Endothelial cell of umbilical vein (primary cell): ENCODE measurements at regions of chr15 and their contacts with region 1.

Region 1: DNA sequence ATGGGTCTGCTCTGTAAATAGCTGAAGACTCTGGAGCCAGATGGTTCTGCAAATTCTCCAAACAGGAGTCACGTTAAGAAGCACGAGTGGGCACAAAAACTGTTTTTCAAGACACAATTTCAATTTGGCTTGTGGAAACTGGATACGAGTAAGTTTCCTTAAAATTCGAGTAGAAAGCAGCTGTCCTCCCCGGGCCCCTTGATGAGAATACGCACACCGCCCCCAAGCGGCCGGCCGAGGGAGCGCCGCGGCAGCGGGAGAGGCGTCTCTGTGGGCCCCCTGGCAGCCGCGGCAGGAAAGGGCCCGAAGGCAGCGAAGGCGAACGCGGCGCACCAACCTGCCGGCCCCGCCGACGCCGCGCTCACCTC is 778 bp upstream of the THBS1 start:
- DNase-seq: peak; percentile 93
- H3K4me3 ChIP-seq: peak overlapping the region; percentile 7 to 61 (median 55)
- H3K27ac ChIP-seq: peak overlapping the region; percentile 98
- H3K4me1 ChIP-seq: peaks cover 20% of the 10 kb centered on the region
- H3K27me3 ChIP-seq: no peaks in the 10 kb centered on the region
- CTCF ChIP-seq: peak; percentile 93 to 96
- POLR2A ChIP-seq: peak; percentile 74

Region 2: GRCh38 chr15:38707802-38708671 is 872.1 kb before region 1 on chr15:
- CTCF ChIA-PET with region 1: interaction called, 30 read pairs
- POLR2A ChIA-PET with region 1: no interaction called
- dilution Hi-C with region 1: no loop called
- intact Hi-C with region 1: loop called (anchors 1 kb)
- DNase-seq: peak; percentile 87
- H3K4me3 ChIP-seq: no peak overlapping the region
- H3K27ac ChIP-seq: no peak overlapping the region
- H3K4me1 ChIP-seq: peaks cover 10% of the 10 kb centered on the region
- H3K27me3 ChIP-seq: no peaks in the 10 kb centered on the region
- CTCF ChIP-seq: peak; percentile 71 to 78
- POLR2A ChIP-seq: no peak

Region 3: DNA sequence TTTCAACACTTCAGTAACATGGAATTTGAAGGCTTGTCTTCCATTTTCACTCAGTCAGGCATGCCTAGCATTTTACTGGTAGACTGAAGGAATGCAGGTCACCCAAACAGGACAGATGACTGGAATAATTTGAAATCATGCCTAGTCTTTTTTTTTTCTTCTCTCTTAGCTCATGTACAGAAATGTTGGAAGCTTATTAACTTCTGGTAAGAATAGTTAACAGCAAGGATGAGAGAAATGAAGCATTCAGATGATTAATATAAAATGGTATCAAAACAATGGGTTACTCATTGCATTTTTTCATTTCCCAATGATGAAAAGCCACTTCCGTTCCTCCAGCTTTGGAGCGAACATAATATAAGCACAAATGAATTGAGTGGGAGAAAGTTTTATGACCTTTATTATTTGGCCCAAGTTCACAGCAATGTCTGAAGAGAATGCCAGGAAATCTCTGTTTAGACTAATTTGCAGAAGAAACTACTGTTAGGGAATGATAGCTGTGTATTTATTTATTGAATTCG is 583.9 kb before region 1 on chr15:
- CTCF ChIA-PET with region 1: interaction called, 14 read pairs
- POLR2A ChIA-PET with region 1: interaction called, 27 read pairs
- dilution Hi-C with region 1: no loop called
- intact Hi-C with region 1: loop called (anchors 1 kb)
- DNase-seq: peak; percentile 96
- H3K4me3 ChIP-seq: no peak overlapping the region
- H3K27ac ChIP-seq: peak overlapping the region; percentile 92
- H3K4me1 ChIP-seq: peaks cover 51% of the 10 kb centered on the region
- H3K27me3 ChIP-seq: no peaks in the 10 kb centered on the region
- CTCF ChIP-seq: no peak
- POLR2A ChIP-seq: peak; percentile 35

Region 4: DNA sequence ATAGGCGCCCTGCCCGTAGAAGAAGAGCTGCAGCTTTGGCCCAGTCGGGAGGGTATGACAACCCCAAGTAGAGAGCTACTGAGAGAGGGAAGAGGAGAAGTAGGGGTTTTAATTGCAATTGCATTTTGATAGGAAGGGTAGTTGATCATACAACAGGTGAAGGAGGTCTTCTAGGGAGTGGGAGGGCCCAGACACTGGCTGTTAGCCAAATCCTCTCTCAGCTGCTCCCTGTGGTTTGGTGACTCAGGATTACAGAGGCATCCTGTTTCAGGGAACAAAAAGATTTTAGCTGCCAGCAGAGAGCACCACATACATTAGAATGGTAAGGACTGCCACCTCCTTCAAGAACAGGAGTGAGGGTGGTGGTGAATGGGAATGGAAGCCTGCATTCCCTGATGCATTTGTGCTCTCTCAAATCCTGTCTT is 408.1 kb before region 1 on chr15:
- CTCF ChIA-PET with region 1: interaction called, 47 read pairs
- POLR2A ChIA-PET with region 1: interaction called, 44 read pairs
- dilution Hi-C with region 1: no loop called
- intact Hi-C with region 1: loop called (anchors 1 kb)
- DNase-seq: peak; percentile 99
- H3K4me3 ChIP-seq: no peak overlapping the region
- H3K27ac ChIP-seq: peak overlapping the region; percentile 87
- H3K4me1 ChIP-seq: peaks cover 17% of the 10 kb centered on the region
- H3K27me3 ChIP-seq: no peaks in the 10 kb centered on the region
- CTCF ChIP-seq: peak; percentile 41 to 62
- POLR2A ChIP-seq: peak; percentile 30

Region 5: DNA sequence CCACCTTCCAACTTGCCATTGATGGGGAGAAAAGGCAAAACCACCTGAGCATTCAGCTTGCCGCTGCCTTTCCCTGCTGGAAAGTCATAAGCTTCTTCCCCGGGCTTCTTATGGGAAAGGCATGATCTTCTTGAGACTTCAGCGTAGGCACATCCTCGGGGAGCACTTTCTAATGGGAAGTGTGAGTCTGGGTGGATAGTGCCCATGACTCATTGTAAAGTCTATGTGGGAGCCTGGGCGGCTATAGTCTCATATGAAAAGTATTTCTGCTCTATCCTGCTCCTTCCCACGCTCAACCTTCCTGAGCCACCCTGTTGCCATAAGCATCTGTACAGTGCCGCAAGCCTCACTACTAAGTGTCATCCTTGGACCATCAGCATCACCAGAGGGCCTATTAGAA is 309.2 kb before region 1 on chr15:
- CTCF ChIA-PET with region 1: interaction called, 3 read pairs
- POLR2A ChIA-PET with region 1: interaction called, 19 read pairs
- dilution Hi-C with region 1: no loop called
- intact Hi-C with region 1: loop called (anchors 2 kb)
- DNase-seq: peak; percentile 90
- H3K4me3 ChIP-seq: no peak overlapping the region
- H3K27ac ChIP-seq: peak overlapping the region; percentile 89
- H3K4me1 ChIP-seq: peaks cover 53% of the 10 kb centered on the region
- H3K27me3 ChIP-seq: no peaks in the 10 kb centered on the region
- CTCF ChIP-seq: no peak
- POLR2A ChIP-seq: no peak

Region 6: GRCh38 chr15:39472621-39473297 is 107.3 kb before region 1 on chr15:
- CTCF ChIA-PET with region 1: interaction called, 9 read pairs
- POLR2A ChIA-PET with region 1: interaction called, 3 read pairs
- dilution Hi-C with region 1: no loop called
- intact Hi-C with region 1: loop called (anchors 1 kb)
- DNase-seq: no peak
- H3K4me3 ChIP-seq: no peak overlapping the region
- H3K27ac ChIP-seq: no peak overlapping the region
- H3K4me1 ChIP-seq: peaks cover 26% of the 10 kb centered on the region
- H3K27me3 ChIP-seq: no peaks in the 10 kb centered on the region
- CTCF ChIP-seq: no peak
- POLR2A ChIP-seq: no peak